ENCODE measurements at regions of chr3 and their contacts with region 1.

Region 1: GRCh38 chr3:151168269-151169094 is 34.5 kb downstream of the GPR171 start:
- DNase-seq: peak; percentile 88
- ATAC-seq: peak; percentile 75

Region 2: GRCh38 chr3:151227807-151228665 is 59.6 kb after region 1 on chr3:
- intact Hi-C with region 1: loop called (anchors 5 kb)
- DNase-seq: peak; percentile 73
- ATAC-seq: peak; percentile 92

Region 3: GRCh38 chr3:151282921-151283320 is 114.4 kb after region 1 on chr3:
- intact Hi-C with region 1: loop called (anchors 2 kb)
- DNase-seq: no peak
- ATAC-seq: peak; percentile 64